AG04449 (cell line): ENCODE measurements at regions of chr12 and their contacts with region 1.

Region 1: GRCh38 chr12:2267703-2268501 is 215.1 kb downstream of the CACNA1C start:
- DNase-seq: no peak
- H3K4me3 ChIP-seq: no peak overlapping the region
- CTCF ChIP-seq: no peak

Region 2: GRCh38 chr12:2284857-2285256 is 17.0 kb after region 1 on chr12:
- CTCF ChIA-PET with region 1: interaction called, 71 read pairs
- POLR2A ChIA-PET with region 1: interaction called, 11 read pairs
- DNase-seq: no peak
- H3K4me3 ChIP-seq: peak overlapping the region; percentile 24
- CTCF ChIP-seq: peak; percentile 87